ENCODE measurements at regions of chr9 and their contacts with region 1.

Region 1: GRCh38 chr9:72364679-72365524 is at the start of gene ZFAND5:
- DNase-seq: peak; percentile 88 to 93 (median 90)
- ATAC-seq: peak; percentile 90
- H3K4me3 ChIP-seq: peak within 1 kb of the TSS; percentile 89
- H3K4me3 Mint-ChIP-seq: peak within 1 kb of the TSS; percentile 91 to 99 (median 96)
- H3K27ac ChIP-seq: peak within 1 kb of the TSS; percentile 94
- H3K27ac Mint-ChIP-seq: peak within 1 kb of the TSS; percentile 97 to 99 (median 99)
- H3K4me1 ChIP-seq: peaks cover 24 to 30% of the 10 kb centered on the region in 2 donors
- H3K4me1 Mint-ChIP-seq: peaks cover 16 to 47% (median 44%) of the 10 kb centered on the region in 7 donors
- H3K27me3 ChIP-seq: no peaks in the 10 kb centered on the region
- H3K27me3 Mint-ChIP-seq: no peaks in the 10 kb centered on the region
- total RNA-seq, gene ZFAND5: 82.4 to 466 (median 155) TPM

Region 2: DNA sequence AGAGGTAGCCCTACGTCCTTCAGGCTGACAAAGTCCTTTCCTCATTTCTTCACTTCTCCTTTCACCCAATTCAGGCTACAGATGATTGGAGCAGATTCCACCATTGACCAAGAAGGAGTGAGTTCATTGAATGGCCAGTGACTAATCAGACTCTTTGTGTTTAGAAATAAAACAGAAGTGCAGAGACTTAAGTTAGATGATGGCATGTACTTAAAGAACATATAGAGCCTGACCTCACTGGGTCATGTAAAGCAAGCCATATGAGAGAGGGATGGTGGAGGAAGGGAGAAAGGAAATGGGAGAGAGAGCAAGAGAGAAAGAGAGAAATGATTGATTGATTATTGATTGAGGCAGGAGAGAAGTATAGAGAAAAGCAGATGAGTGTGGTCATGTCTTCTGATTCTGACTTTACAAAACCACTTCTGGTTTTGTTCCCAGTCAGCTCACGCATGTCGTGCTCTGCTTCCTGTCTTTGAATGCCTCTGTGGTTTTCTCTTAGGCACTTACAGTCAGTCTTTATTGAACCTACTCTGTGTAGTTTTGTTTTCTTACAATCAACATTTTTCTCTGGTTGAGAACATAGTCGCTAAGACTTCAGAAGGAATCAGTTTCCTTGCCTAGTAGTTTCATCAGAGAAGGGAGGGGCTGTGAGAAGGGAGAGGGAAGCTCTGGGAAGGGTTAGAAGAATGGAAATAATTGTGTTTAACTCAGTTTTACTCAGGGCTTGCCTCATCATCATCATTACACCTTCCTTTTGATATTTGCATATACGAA is 1801.3 kb before region 1 on chr9:
- CTCF ChIA-PET with region 1: no interaction called
- POLR2A ChIA-PET with region 1: no interaction called
- intact Hi-C with region 1: loop called (anchors 2 to 10 kb)
- DNase-seq: peak in 8 of 9 donors; percentile 45 to 86 (median 78)
- ATAC-seq: peak; percentile 93
- H3K4me3 ChIP-seq: peak overlapping the region; percentile 15
- H3K4me3 Mint-ChIP-seq: peak overlapping the region; percentile 45 to 85 (median 68)
- H3K27ac ChIP-seq: peak overlapping the region; percentile 67
- H3K27ac Mint-ChIP-seq: peak overlapping the region; percentile 85 to 98 (median 95)
- H3K4me1 ChIP-seq: peaks cover 17 to 34% of the 10 kb centered on the region in 2 donors
- H3K4me1 Mint-ChIP-seq: peaks cover 33 to 66% (median 53%) of the 10 kb centered on the region in 7 donors
- H3K27me3 ChIP-seq: no peaks in the 10 kb centered on the region
- H3K27me3 Mint-ChIP-seq: no peaks in the 10 kb centered on the region

Region 3: DNA sequence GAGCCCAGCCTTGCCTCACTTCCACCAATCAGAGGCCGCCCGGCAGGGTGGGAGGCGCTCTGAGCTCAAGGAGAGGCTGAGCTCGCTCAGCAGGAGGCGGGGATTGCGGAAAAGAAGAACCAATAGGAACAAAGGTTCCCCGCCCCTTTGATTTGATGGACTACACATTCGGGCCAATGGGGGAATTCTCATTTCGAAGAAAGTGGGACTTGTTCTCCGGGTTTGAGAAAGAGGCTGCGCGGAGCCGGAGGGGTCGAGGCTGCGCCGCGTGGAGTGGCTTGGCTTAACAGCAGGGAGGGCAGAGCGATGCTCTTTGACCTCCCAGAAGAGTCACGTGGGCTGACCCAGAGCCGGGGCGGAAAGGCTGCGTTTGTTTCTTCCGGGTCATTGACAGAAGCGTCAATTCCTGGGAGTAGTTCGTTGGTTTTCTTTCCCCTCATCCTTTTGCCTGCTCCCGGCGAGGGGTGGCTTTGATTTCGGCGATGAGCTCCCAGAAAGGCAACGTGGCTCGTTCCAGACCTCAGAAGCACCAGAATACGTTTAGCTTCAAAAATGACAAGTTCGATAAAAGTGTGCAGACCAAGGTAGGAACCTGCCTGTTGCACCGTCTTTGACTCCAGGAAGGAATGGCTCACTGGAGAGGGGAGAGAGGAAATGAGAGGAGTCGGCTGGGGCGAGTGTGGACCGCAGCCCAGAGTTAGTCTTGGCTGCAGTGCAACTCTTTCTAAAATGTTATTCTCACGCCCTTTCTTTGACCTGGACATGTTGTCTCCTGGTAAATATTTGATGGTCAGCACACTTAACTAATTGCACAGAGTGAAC is 453.4 kb before region 1 on chr9 and contains the start of gene C9orf85:
- CTCF ChIA-PET with region 1: no interaction called
- POLR2A ChIA-PET with region 1: interaction called, 3 read pairs
- intact Hi-C with region 1: loop called (anchors 1 to 2 kb)
- DNase-seq: peak; percentile 84 to 98 (median 95)
- ATAC-seq: peak; percentile 96
- H3K4me3 ChIP-seq: peak within 1 kb of the TSS; percentile 83
- H3K4me3 Mint-ChIP-seq: peak within 1 kb of the TSS; percentile 95 to 100 (median 100)
- H3K27ac ChIP-seq: peak within 1 kb of the TSS; percentile 74
- H3K27ac Mint-ChIP-seq: peak within 1 kb of the TSS; percentile 90 to 99 (median 95)
- H3K4me1 ChIP-seq: peaks cover 15 to 22% of the 10 kb centered on the region in 2 donors
- H3K4me1 Mint-ChIP-seq: peaks cover 47 to 80% (median 67%) of the 10 kb centered on the region in 7 donors
- H3K27me3 ChIP-seq: peaks cover 0 to 3% of the 10 kb centered on the region in 2 donors
- H3K27me3 Mint-ChIP-seq: no peaks in the 10 kb centered on the region
- total RNA-seq, gene C9orf85: 4.8 to 10.3 (median 8.6) TPM

Region 4: DNA sequence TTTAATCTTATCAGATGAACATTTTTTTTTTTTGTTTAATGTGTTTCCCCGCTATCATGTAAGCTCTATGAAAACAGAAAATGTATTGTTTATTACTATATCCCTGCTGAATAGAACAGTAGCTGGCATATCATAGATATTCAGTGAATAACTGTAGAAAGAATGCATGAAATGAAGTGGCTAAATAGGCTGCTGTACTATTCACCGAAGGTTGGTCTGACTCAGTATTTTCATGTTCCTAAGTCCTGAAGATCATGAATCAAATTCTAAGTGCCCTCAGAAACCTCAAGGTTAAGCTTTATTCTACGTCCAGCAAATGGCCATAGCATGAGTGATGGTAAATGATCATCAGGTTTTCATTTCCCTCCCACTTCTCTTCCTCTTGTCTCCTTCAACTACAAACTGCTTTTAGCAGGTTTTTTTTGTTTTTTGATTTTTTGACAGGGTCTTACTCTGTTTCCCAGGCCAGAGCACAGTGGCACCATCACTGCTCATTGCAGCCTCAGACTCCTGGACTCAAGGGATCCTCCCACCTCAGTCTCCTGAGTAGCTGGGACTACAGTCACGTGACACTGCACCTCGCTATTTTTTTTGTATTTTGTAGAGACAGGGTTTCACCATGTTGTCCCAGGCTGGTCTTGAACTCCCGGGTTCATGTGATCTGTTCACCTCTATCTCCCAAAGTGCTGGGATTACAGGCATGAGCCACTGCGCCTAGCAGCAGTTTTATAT is 19.2 kb after region 1 on chr9:
- CTCF ChIA-PET with region 1: no interaction called
- POLR2A ChIA-PET with region 1: interaction called, 4 read pairs
- intact Hi-C with region 1: loop called (anchors 2 kb)
- DNase-seq: no peak
- ATAC-seq: no peak
- H3K4me3 ChIP-seq: no peak overlapping the region
- H3K4me3 Mint-ChIP-seq: no peak overlapping the region
- H3K27ac ChIP-seq: no peak overlapping the region
- H3K27ac Mint-ChIP-seq: peak overlapping the region in 1 of 9 donors; percentile 6
- H3K4me1 ChIP-seq: no peaks in the 10 kb centered on the region
- H3K4me1 Mint-ChIP-seq: peaks cover 0 to 15% (median 4%) of the 10 kb centered on the region in 7 donors
- H3K27me3 ChIP-seq: no peaks in the 10 kb centered on the region
- H3K27me3 Mint-ChIP-seq: peaks cover 0 to 4% (median 0%) of the 10 kb centered on the region in 5 donors

Region 5: GRCh38 chr9:72478966-72479365 is 114.1 kb after region 1 on chr9:
- CTCF ChIA-PET with region 1: no interaction called
- POLR2A ChIA-PET with region 1: no interaction called
- intact Hi-C with region 1: loop called in 1 of 2 experiments (anchors 2 kb)
- DNase-seq: no peak
- ATAC-seq: no peak
- H3K4me3 ChIP-seq: no peak overlapping the region
- H3K4me3 Mint-ChIP-seq: peak overlapping the region in 7 of 10 donors; percentile 46 to 80 (median 62)
- H3K27ac ChIP-seq: no peak overlapping the region
- H3K27ac Mint-ChIP-seq: peak overlapping the region in 1 of 9 donors; percentile 80
- H3K4me1 ChIP-seq: peaks cover 0 to 6% of the 10 kb centered on the region in 2 donors
- H3K4me1 Mint-ChIP-seq: peaks cover 8 to 43% (median 19%) of the 10 kb centered on the region in 7 donors
- H3K27me3 ChIP-seq: no peaks in the 10 kb centered on the region
- H3K27me3 Mint-ChIP-seq: no peaks in the 10 kb centered on the region

Region 6: DNA sequence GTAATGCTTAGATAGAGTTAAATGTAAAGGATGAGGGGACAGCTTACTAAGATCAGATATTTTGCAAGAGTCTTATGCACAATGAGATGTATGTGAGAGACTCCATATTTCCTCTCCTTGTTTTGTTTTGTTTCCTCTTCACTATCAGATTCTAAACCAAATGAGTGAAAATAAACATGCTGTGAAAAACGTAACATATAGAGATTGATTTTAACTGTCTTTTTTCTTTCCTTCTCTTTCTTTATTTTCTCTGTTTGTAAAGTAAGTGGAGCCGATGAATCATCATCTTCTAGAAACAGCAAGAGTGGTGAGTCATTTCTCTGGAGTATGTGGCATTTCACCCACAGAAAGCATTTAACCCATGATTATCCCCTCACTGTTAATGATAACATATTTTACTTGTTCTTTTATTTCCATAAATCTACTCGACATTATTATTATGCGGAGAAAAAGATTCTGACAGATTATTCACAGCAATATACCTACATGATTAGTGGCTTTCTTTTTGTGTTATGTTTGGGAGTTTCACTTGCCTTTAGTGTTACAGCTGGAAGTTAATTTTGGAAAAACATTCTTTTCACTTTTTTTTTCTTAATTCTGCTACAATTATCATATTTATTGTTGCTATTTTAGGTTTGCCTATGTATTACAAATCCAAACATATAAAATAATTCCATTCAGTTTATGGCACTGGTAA is 784.6 kb after region 1 on chr9:
- CTCF ChIA-PET with region 1: no interaction called
- POLR2A ChIA-PET with region 1: no interaction called
- intact Hi-C with region 1: loop called in 1 of 2 experiments (anchors 2 kb)
- DNase-seq: peak in 1 of 9 donors; percentile 57
- ATAC-seq: peak; percentile 49
- H3K4me3 ChIP-seq: peak overlapping the region; percentile 17
- H3K4me3 Mint-ChIP-seq: peak overlapping the region in 9 of 10 donors; percentile 8 to 79 (median 60)
- H3K27ac ChIP-seq: peak overlapping the region; percentile 32
- H3K27ac Mint-ChIP-seq: peak overlapping the region; percentile 71 to 96 (median 78)
- H3K4me1 ChIP-seq: peaks cover 28 to 32% of the 10 kb centered on the region in 2 donors
- H3K4me1 Mint-ChIP-seq: peaks cover 34 to 80% (median 54%) of the 10 kb centered on the region in 7 donors
- H3K27me3 ChIP-seq: no peaks in the 10 kb centered on the region
- H3K27me3 Mint-ChIP-seq: peaks cover 0 to 2% (median 0%) of the 10 kb centered on the region in 5 donors

Measured in naive thymus-derived CD4-positive, alpha-beta T cell (primary cell).